ENCODE measurements at regions of chr18 and their contacts with region 1.

Region 1: GRCh38 chr18:49178736-49179135 is 228.0 kb upstream of the SMAD7 start:
- DNase-seq: peak; percentile 37
- H3K4me3 ChIP-seq: no peak overlapping the region
- H3K27ac ChIP-seq: no peak overlapping the region
- H3K4me1 ChIP-seq: peaks cover 18% of the 10 kb centered on the region
- H3K27me3 ChIP-seq: no peaks in the 10 kb centered on the region
- CTCF ChIP-seq: peak; percentile 44 to 48
- POLR2A ChIP-seq: no peak

Region 2: DNA sequence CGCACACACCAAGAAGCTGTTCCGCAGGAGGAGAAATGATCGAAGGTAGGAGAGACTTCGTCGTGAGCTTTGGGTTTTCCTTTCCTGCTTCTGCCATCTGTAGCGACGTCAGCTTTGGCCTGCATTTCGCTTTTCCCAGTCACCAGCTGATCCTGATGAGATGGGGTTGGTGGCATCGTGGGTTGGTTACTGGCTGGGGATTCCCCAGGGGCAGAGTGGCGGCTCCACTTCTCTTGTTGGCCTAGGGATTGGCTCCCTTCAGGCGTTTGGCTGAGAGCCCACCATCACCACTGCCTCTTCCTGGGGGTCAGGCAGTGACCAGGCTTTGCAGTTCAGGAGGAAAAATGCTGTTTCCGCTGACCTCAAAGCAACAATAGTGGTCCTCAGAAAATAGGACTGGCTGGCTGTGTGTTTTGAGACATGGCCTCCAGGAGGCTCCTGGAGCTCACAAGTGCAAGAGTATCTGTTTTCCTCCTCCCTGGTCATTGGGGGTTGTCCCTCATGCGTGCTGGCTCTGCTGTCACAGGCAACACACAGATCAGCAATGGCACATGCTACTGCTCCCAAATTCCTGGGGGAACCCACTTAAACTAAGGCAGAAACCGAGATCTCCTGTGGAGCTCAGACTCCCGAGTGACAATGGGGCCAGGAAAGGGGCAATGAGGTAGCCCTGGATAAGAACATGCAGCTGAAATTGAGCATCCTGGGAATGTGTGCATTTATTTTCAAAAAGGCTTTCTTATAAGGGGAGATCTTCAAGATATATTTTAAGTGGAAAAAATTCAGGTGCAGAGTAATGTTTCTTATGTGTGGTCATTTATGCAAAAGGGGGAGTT is 466.9 kb before region 1 on chr18:
- CTCF ChIA-PET with region 1: interaction called, 12 read pairs
- POLR2A ChIA-PET with region 1: no interaction called
- dilution Hi-C with region 1: no loop called
- intact Hi-C with region 1: loop called (anchors 1 kb)
- DNase-seq: peak; percentile 51
- H3K4me3 ChIP-seq: no peak overlapping the region
- H3K27ac ChIP-seq: no peak overlapping the region
- H3K4me1 ChIP-seq: peaks cover 35% of the 10 kb centered on the region
- H3K27me3 ChIP-seq: no peaks in the 10 kb centered on the region
- CTCF ChIP-seq: peak; percentile 45 to 56
- POLR2A ChIP-seq: no peak

Region 3: DNA sequence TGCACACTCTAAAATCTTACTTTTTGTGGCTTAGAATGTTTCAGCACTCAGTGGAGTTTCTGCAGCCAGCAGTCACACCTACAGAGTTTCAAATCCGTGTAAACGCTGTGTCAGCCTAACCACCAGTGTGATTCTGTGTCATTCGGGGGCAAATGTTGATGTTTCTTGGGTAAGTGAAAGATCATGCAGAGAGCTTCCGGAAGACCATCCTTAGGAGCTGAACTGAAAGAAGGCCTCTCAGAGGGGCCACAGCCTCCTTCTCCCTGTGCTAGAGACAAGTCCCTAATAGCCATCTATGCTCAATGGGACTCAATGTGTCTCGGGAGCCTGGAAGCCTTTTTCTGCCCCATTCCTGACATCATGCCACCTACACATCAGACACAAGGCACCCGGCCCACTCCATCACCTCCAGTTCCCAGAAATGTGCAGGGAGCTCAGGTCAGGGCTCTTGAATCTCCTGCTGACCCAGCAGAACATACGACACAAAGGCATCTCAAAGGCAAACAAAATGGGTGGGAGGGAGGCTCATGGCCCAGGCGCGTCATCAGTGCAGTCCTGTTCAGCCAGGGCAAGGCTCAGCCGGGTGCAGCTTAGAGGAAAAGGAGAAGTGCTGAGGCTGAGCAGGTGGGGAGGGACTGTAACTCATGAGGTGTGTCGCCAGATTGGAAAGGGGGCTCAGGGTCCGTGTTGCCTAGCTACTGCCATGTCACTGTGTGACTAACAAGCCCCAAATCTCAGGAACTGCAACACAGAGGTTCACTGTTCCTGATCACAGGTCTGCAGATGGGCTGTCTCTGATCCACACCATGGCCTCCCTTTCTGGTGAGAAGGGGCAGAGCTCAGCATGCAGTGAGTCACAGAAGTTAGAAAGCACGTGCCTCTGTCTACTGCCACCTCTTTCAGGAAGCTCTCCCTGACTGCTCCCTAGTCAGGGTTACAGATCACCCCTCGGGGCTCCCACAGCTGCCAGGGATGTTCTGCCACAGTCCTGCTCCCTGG is 310.0 kb before region 1 on chr18:
- CTCF ChIA-PET with region 1: no interaction called
- POLR2A ChIA-PET with region 1: no interaction called
- dilution Hi-C with region 1: no loop called
- intact Hi-C with region 1: no loop called
- DNase-seq: no peak
- H3K4me3 ChIP-seq: no peak overlapping the region
- H3K27ac ChIP-seq: no peak overlapping the region
- H3K4me1 ChIP-seq: peaks cover 12% of the 10 kb centered on the region
- H3K27me3 ChIP-seq: no peaks in the 10 kb centered on the region
- CTCF ChIP-seq: no peak
- POLR2A ChIP-seq: no peak

Region 4: DNA sequence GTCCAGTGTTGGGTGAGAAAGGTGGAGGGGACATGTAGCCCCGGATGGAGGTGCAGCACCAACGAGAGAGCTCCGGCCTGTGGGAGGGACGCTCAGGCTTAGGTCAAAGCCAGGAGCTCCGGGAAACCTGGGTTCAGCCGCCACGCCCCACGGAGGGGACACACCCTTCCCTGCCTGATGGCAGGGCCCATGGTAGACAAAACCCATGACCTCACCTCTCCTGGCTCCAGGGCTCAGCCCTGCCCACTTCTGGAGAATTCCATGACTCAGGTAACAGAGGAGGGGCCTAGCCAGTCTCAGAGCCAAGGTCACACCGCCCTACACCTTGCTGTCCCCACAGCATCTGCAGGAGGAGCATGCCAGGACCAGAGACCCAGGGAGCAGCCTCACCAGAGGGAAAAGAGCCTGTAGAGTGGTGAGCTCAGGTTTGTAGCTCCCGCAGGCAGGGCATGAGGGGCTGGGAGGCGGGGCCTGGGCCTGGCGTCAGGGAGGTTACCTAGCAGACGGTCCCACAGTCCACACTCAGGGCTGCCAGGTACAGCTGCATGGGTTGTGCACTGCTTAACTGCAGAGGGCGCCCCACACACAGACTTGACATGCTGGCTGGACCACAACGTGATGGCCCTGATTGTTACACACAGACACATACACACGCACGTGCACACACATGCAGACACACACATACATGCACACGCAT is 157.2 kb before region 1 on chr18:
- CTCF ChIA-PET with region 1: interaction called, 5 read pairs
- POLR2A ChIA-PET with region 1: no interaction called
- dilution Hi-C with region 1: no loop called
- intact Hi-C with region 1: loop called (anchors 5 kb)
- DNase-seq: peak; percentile 19
- H3K4me3 ChIP-seq: no peak overlapping the region
- H3K27ac ChIP-seq: no peak overlapping the region
- H3K4me1 ChIP-seq: no peaks in the 10 kb centered on the region
- H3K27me3 ChIP-seq: no peaks in the 10 kb centered on the region
- CTCF ChIP-seq: peak; percentile 46 to 60
- POLR2A ChIP-seq: no peak

Region 5: DNA sequence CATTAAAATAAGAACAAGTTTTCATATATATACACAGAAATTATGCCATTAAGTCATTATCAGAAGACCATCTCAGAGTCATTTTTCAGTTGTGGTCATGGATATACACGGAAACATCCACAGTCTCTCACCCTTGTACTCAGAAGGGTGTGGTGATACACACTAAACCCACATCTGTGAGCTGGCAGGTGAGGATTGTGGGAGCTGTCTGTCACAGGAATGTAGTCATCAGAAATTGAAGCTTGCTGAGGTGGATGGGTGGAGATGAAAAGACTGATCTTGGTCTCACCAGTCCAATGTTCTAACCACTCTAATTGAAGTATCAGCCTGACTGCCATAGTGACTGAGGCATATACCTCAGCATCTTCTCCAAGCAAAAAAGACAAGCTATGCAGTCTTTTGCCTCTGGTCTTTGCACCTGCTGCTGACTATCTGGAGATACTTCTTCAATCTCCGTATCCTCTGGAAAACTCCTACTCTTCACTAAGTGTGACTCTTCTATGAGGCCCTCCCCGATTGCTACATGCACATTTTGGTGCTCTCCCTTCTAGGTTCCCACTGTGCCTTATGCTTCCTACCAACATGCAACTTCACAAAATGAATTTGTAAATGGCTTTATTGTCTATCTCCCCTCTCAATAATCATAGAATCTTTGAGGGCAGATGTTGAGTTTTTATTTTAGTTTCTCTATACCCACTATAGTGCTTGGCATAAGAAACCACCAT is 48.9 kb after region 1 on chr18:
- CTCF ChIA-PET with region 1: interaction called, 10 read pairs
- POLR2A ChIA-PET with region 1: no interaction called
- dilution Hi-C with region 1: no loop called
- intact Hi-C with region 1: loop called (anchors 10 kb)
- DNase-seq: peak; percentile 19
- H3K4me3 ChIP-seq: no peak overlapping the region
- H3K27ac ChIP-seq: no peak overlapping the region
- H3K4me1 ChIP-seq: peaks cover 6% of the 10 kb centered on the region
- H3K27me3 ChIP-seq: no peaks in the 10 kb centered on the region
- CTCF ChIP-seq: no peak
- POLR2A ChIP-seq: no peak

Region 6: GRCh38 chr18:49371786-49372185 is 193.1 kb after region 1 on chr18:
- CTCF ChIA-PET with region 1: no interaction called
- POLR2A ChIA-PET with region 1: no interaction called
- dilution Hi-C with region 1: no loop called
- intact Hi-C with region 1: no loop called
- DNase-seq: no peak
- H3K4me3 ChIP-seq: no peak overlapping the region
- H3K27ac ChIP-seq: no peak overlapping the region
- H3K4me1 ChIP-seq: no peaks in the 10 kb centered on the region
- H3K27me3 ChIP-seq: no peaks in the 10 kb centered on the region
- CTCF ChIP-seq: no peak
- POLR2A ChIP-seq: no peak